ENCODE measurements at regions of chr1 and their contacts with region 1.

Region 1: GRCh38 chr1:19096036-19096833 is 113.8 kb downstream of the UBR4 start:
- DNase-seq: no peak
- H3K4me3 ChIP-seq: no peak overlapping the region
- CTCF ChIP-seq: no peak
- POLR2A ChIP-seq: no peak

Region 2: DNA sequence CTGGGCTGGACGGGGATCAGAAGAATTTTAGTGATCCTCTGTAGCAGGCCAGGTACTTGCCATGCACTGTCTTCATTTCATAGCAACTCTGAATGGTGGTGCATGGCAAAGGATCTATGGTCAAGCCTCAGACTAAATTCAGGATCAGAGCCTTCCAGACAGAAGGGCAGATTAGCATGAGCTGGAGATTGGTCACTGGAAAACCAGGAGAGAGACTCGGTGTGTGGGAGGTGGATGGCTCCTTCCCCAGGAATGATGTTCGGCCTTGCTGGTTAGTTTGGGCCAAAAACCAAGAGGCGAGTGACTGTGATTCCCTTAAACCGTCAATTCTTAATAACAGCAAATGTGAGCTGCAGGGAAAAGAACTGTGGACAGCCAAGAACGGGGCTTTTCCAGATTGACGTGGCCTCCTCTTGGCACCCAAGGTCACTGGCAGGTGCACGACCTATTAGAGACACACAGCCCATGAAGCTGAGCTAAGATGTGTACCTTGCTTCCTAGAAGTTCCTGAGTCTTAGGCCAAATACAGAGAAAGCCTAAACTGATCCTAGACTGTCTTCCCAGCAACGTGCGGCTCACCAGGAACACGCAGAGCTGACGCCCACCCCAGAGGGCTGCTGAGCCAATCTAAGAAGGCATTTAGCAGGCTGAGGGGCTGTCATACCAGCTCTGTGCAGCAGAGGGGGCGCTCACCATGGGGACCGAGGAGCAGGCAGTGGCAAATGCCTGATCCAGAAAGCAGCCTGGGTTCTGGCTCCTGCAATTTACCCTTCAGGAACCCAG is 212.4 kb before region 1 on chr1:
- intact Hi-C with region 1: loop called (anchors 5 kb)
- DNase-seq: peak; percentile 74 to 94
- H3K4me3 ChIP-seq: no peak overlapping the region
- CTCF ChIP-seq: peak in 1 of 3 donors; percentile 61
- POLR2A ChIP-seq: no peak

Measured in lower leg skin (tissue), 4 donors.